ENCODE measurements at regions of chr5 and their contacts with region 1.

Region 1: DNA sequence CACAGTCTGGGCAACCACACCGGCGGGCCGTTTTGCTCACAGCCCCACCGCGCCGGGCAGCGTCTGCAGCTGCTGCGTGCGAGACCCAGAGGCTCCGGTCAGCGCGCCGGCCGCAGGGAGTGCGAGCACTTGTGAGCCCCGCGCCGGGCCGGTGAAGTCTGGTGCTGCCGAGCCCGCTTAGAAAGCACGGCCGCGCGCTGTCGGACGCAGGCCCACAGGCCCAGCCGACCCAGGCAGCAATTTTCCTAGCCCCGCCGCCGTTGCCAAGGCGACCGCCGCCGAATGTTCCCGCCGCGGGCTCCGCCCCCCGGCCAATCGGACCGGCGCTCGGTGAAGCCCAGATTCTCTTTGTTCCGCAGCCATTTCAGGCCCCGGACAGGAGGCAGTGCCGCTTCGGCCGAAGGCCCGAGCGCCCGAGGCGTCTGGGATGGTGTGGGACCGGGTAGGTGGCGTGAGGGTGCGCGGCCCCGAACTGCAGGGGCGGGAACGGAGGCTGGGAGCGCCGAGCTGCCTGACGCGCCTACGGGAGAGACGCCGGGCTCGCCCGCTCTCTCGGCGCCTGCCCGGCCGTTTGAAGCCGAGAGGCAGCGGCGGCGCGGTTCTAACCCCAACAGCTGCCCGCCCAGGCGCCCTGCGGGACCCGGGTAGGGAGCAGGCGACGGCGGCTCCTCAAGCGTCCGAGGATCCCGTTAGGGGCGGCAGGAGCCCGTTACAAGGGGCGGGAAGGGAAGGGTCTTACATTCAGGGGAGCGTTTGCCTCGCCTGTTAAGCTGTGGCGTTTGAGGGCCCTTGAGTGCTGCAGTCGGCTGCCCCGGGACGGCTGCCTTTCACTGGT is at the start of gene TNPO1:
- H3K4me3 ChIP-seq: peak within 1 kb of the TSS; percentile 83
- H3K27ac ChIP-seq: peak within 1 kb of the TSS; percentile 99
- H3K4me1 ChIP-seq: peaks cover 9% of the 10 kb centered on the region
- CTCF ChIP-seq: no peak; the same call in 1 of the 2 replicates

Region 2: GRCh38 chr5:72611118-72611730 is 205.3 kb before region 1 on chr5:
- CTCF ChIA-PET with region 1: interaction called, 47 read pairs
- POLR2A ChIA-PET with region 1: interaction called, 13 read pairs
- H3K4me3 ChIP-seq: no peak overlapping the region
- H3K27ac ChIP-seq: no peak overlapping the region
- H3K4me1 ChIP-seq: no peaks in the 10 kb centered on the region
- CTCF ChIP-seq: peak; percentile 66; the same call in 1 of the 2 replicates

Region 3: GRCh38 chr5:72829707-72830106 is 13.2 kb after region 1 on chr5:
- CTCF ChIA-PET with region 1: interaction called, 31 read pairs
- POLR2A ChIA-PET with region 1: no interaction called
- H3K4me3 ChIP-seq: no peak overlapping the region
- H3K27ac ChIP-seq: no peak overlapping the region
- H3K4me1 ChIP-seq: peaks cover 9% of the 10 kb centered on the region
- CTCF ChIP-seq: no peak

Region 4: GRCh38 chr5:73031839-73032238 is 215.3 kb after region 1 on chr5:
- CTCF ChIA-PET with region 1: no interaction called
- POLR2A ChIA-PET with region 1: no interaction called
- H3K4me3 ChIP-seq: no peak overlapping the region
- H3K27ac ChIP-seq: no peak overlapping the region
- H3K4me1 ChIP-seq: peaks cover 14% of the 10 kb centered on the region
- CTCF ChIP-seq: no peak

Region 5: GRCh38 chr5:73081093-73081492 is 264.6 kb after region 1 on chr5:
- CTCF ChIA-PET with region 1: no interaction called
- POLR2A ChIA-PET with region 1: no interaction called
- H3K4me3 ChIP-seq: no peak overlapping the region
- H3K27ac ChIP-seq: no peak overlapping the region
- H3K4me1 ChIP-seq: no peaks in the 10 kb centered on the region; the same call in 1 of the 2 replicates
- CTCF ChIP-seq: no peak

Measured in HEK293 (cell line).